ENCODE measurements at regions of chr9 and their contacts with region 1.

Region 1: GRCh38 chr9:35657546-35658136 is at the start of gene RMRP:
- DNase-seq: peak; percentile 76 to 94 (median 91)
- H3K4me3 ChIP-seq: peak within 1 kb of the TSS; percentile 90
- H3K4me3 Mint-ChIP-seq: peak within 1 kb of the TSS; percentile 84 to 97 (median 92)
- H3K27ac ChIP-seq: peak within 1 kb of the TSS; percentile 99
- H3K27ac Mint-ChIP-seq: peak within 1 kb of the TSS; percentile 97 to 100 (median 99)
- H3K4me1 ChIP-seq: peaks cover 60% of the 10 kb centered on the region
- H3K4me1 Mint-ChIP-seq: peaks cover 61 to 79% (median 72%) of the 10 kb centered on the region in 3 donors
- H3K27me3 ChIP-seq: no peaks in the 10 kb centered on the region
- H3K27me3 Mint-ChIP-seq: peaks cover 4 to 9% of the 10 kb centered on the region in 2 donors
- total RNA-seq, gene RMRP: 7,718 to 11,549 TPM

Region 2: DNA sequence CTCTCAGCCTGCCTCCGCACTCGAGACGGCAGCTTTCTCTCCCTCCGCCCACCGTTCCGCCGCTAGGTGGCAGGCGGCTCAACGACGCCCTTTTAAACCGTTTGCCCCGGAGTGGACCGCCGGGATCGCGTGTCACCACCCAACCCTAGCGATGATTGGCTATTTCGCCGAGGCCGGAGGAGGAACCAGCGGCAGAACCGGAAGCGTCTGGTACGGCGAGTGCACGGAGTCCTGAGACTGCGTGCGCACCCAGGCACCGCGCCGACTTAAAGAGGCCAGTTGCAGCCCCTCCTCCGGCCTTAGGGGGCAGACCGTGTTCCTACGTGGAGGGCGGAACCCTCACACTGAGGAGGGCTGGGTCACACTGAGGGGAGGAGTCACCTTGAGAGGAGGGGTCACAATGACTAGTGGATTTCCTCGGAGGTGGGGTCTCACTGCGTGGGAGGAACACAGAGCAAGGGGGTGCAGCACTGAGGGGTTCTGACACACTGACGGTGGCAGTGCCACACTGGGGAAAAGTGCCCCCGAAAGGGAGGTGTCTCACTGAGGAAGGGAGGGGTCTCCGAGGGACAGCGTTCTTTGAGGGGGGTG is 53.6 kb before region 1 on chr9:
- CTCF ChIA-PET with region 1: interaction called, 72 read pairs
- POLR2A ChIA-PET with region 1: interaction called, 6 read pairs
- DNase-seq: peak; percentile 99 to 100 (median 99)
- H3K4me3 ChIP-seq: peak overlapping the region; percentile 99
- H3K4me3 Mint-ChIP-seq: peak overlapping the region; percentile 94 to 99 (median 98)
- H3K27ac ChIP-seq: peak overlapping the region; percentile 87
- H3K27ac Mint-ChIP-seq: peak overlapping the region; percentile 96 to 100 (median 98)
- H3K4me1 ChIP-seq: peaks cover 21% of the 10 kb centered on the region
- H3K4me1 Mint-ChIP-seq: peaks cover 33 to 38% (median 34%) of the 10 kb centered on the region in 3 donors
- H3K27me3 ChIP-seq: no peaks in the 10 kb centered on the region
- H3K27me3 Mint-ChIP-seq: peaks cover 0 to 2% of the 10 kb centered on the region in 2 donors

Region 3: DNA sequence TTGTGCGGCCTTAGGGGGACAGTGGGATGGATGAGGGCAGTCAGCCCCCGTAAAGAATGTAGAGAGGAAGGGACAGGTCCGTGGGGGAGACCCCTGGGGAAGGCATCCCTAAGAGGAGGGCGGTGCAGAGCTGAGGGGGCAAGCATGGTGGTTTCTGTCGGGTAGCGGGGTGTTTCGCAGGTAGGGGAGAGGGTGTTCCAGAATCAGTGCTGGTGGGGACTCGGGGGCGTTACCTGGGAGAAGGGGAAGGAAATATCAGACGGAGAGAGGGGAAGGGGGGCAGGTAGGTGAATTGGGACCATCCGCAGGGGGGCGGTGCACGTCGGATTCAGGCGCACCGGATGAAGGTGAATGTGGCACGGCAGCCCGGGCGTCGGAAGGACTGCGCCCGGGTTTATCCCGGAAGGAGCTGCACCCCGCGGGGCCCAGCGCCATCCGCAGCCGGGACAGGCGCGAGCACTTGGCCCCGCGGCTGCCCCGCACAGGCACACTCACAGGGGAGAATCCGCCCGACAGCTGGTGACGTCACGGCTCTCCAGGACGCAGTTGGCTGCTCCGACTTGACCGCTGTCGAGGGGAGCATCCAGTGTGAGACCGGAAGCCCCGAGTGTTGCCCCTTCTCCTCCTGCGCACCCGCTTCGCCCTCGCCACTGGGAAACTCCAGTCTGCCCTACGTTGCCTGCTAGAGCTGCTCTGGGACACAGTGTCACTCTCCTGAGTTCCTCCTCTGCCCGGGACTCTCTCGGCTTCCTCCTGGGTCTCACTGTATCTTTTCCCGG is 40.8 kb before region 1 on chr9:
- CTCF ChIA-PET with region 1: interaction called, 72 read pairs
- POLR2A ChIA-PET with region 1: interaction called, 10 read pairs
- DNase-seq: peak; percentile 63 to 84 (median 71)
- H3K4me3 ChIP-seq: peak overlapping the region; percentile 82
- H3K4me3 Mint-ChIP-seq: peak overlapping the region; percentile 85 to 92 (median 89)
- H3K27ac ChIP-seq: peak overlapping the region; percentile 70
- H3K27ac Mint-ChIP-seq: peak overlapping the region; percentile 89 to 100 (median 98)
- H3K4me1 ChIP-seq: peaks cover 34% of the 10 kb centered on the region
- H3K4me1 Mint-ChIP-seq: peaks cover 42 to 49% (median 46%) of the 10 kb centered on the region in 3 donors
- H3K27me3 ChIP-seq: no peaks in the 10 kb centered on the region
- H3K27me3 Mint-ChIP-seq: peaks cover 0 to 1% of the 10 kb centered on the region in 2 donors

Region 4: GRCh38 chr9:35690431-35691333 is 33.0 kb after region 1 on chr9:
- CTCF ChIA-PET with region 1: interaction called, 82 read pairs
- POLR2A ChIA-PET with region 1: interaction called, 6 read pairs
- DNase-seq: peak; percentile 16 to 55 (median 23)
- H3K4me3 ChIP-seq: peak overlapping the region; percentile 67
- H3K4me3 Mint-ChIP-seq: peak overlapping the region; percentile 83 to 99 (median 89)
- H3K27ac ChIP-seq: peak overlapping the region; percentile 51
- H3K27ac Mint-ChIP-seq: peak overlapping the region; percentile 15 to 94 (median 83)
- H3K4me1 ChIP-seq: peaks cover 6% of the 10 kb centered on the region
- H3K4me1 Mint-ChIP-seq: peaks cover 10 to 28% (median 18%) of the 10 kb centered on the region in 3 donors
- H3K27me3 ChIP-seq: no peaks in the 10 kb centered on the region
- H3K27me3 Mint-ChIP-seq: no peaks in the 10 kb centered on the region

Region 5: DNA sequence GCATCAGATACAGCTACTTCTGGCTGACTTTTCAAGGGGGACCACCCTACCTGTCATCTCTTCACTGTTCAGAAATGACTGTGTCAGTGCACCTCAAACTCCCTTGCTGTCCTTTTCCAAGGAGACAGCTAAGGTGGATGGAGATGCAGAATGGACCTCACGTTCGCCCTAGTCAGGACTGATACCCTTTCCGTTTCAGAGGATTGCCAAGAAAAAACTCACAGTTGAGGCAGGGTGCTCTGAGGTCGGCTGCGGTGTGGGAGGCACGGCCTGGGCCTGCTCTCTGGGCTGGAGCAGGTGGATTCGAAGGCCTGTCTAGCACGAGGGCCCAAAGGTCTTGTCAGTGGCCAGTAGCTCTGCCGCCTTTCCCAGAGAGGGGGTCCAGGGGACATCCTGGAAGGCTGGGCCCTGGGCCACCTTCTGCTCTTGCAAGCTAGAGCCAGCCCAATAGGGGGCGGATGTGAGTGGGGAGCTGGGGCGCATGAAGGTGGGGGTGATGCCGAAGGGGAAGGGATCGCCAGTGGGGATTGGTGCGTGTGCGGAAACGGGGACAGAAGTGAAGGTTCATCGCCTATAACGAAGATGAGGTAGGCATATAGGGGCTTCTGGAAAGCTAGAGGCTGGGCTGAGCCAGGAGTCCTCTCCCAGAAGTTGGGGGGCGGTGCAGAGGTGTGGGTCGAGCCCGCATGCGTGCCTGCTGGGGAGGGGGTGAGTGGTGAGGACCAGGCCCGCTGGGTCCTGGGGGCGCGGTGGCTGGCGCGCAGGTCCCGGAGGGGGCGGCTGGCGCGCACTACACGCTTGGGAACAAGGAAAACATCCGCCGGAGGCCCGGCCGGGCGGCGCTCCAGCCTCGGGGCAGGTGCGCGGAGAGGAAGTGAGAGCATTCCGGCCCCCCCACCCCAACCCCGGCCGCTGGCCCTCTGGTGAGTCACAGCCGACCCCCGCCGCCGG is 98.9 kb after region 1 on chr9:
- CTCF ChIA-PET with region 1: interaction called, 12 read pairs
- POLR2A ChIA-PET with region 1: interaction called, 4 read pairs
- DNase-seq: peak; percentile 65 to 86 (median 67)
- H3K4me3 ChIP-seq: peak overlapping the region; percentile 92
- H3K4me3 Mint-ChIP-seq: peak overlapping the region; percentile 92 to 100 (median 96)
- H3K27ac ChIP-seq: peak overlapping the region; percentile 76
- H3K27ac Mint-ChIP-seq: peak overlapping the region; percentile 92 to 99 (median 96)
- H3K4me1 ChIP-seq: peaks cover 25% of the 10 kb centered on the region
- H3K4me1 Mint-ChIP-seq: peaks cover 43 to 63% (median 51%) of the 10 kb centered on the region in 3 donors
- H3K27me3 ChIP-seq: no peaks in the 10 kb centered on the region
- H3K27me3 Mint-ChIP-seq: no peaks in the 10 kb centered on the region